Aorta (tissue), 5 donors: ENCODE measurements at regions of chr10 and their contacts with region 1.

Region 1: GRCh38 chr10:5466418-5467154 is 32.8 kb downstream of the CALML5 start:
- DNase-seq: no peak
- ATAC-seq: peak; percentile 51
- H3K4me3 ChIP-seq: no peak overlapping the region
- H3K27ac ChIP-seq: peak overlapping the region; percentile 22 to 53
- H3K4me1 ChIP-seq: no peaks in the 10 kb centered on the region
- H3K27me3 ChIP-seq: no peaks in the 10 kb centered on the region

Region 2: GRCh38 chr10:5534880-5535856 is 68.6 kb after region 1 on chr10:
- intact Hi-C with region 1: loop called (anchors 5 kb)
- DNase-seq: peak in 1 of 2 donors; percentile 15
- ATAC-seq: peak; percentile 88
- H3K4me3 ChIP-seq: no peak overlapping the region
- H3K27ac ChIP-seq: peak overlapping the region; percentile 43 to 68
- H3K4me1 ChIP-seq: no peaks in the 10 kb centered on the region
- H3K27me3 ChIP-seq: no peaks in the 10 kb centered on the region

Region 3: GRCh38 chr10:5575482-5576166 is 109.0 kb after region 1 on chr10:
- intact Hi-C with region 1: no loop called
- DNase-seq: peak in 1 of 2 donors; percentile 75
- ATAC-seq: peak; percentile 26
- H3K4me3 ChIP-seq: no peak overlapping the region
- H3K27ac ChIP-seq: no peak overlapping the region
- H3K4me1 ChIP-seq: no peaks in the 10 kb centered on the region
- H3K27me3 ChIP-seq: no peaks in the 10 kb centered on the region